Activated naive CD4-positive, alpha-beta T cell treated with anti-CD3 and anti-CD28 coated beads for 36 hours (primary cell): ENCODE measurements at regions of chr22 and their contacts with region 1.

Region 1: DNA sequence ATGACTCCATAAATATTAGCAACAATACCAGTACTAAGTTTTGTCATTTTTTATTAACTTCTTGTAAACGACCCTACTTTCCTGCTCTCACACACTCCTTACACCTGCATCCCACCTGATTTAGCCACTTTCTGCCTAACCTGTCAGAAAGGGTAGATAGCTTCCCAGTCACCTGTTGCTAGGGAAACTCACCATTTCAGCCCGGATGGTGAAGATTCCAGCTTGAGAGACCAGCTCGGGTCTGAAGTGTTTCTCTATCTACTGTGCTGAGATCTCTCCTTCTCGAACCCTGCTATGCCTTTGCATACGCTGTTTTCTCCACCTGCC is at the start of gene PARVG:
- DNase-seq: peak; percentile 64
- H3K4me3 Mint-ChIP-seq: peak within 1 kb of the TSS; percentile 92
- H3K27ac Mint-ChIP-seq: peak within 1 kb of the TSS; percentile 95
- H3K4me1 Mint-ChIP-seq: peaks cover 15% of the 10 kb centered on the region
- H3K27me3 Mint-ChIP-seq: no peaks in the 10 kb centered on the region
- total RNA-seq, gene PARVG: 64.6 to 67.8 TPM

Region 2: DNA sequence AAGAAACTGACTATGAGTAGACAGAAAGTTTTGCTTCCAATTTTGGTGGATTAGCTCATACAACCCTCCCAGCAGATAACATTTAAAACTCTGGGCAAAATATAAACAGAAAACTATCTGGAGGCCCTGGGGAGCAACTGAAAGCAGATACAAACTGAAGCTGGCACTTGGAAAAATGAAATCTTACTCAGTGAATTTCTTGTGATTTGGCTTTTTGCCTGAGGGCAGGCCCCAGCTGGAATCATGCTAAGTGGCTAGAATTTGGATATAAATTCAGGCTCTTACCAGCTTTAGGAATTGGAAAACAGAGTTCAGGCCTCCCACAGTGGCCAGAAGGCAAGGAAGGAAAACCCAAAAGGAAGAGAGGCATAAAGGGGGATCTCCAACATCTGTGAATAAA is 454.3 kb before region 1 on chr22:
- CTCF ChIA-PET with region 1: no interaction called
- intact Hi-C with region 1: no loop called
- DNase-seq: no peak
- H3K4me3 Mint-ChIP-seq: no peak overlapping the region
- H3K27ac Mint-ChIP-seq: no peak overlapping the region
- H3K4me1 Mint-ChIP-seq: no peaks in the 10 kb centered on the region
- H3K27me3 Mint-ChIP-seq: peaks cover 6% of the 10 kb centered on the region

Region 3: GRCh38 chr22:43993027-43993760 is 187.5 kb before region 1 on chr22:
- CTCF ChIA-PET with region 1: interaction called, 8 read pairs
- intact Hi-C with region 1: loop called (anchors 10 kb)
- DNase-seq: peak; percentile 68
- H3K4me3 Mint-ChIP-seq: no peak overlapping the region
- H3K27ac Mint-ChIP-seq: no peak overlapping the region
- H3K4me1 Mint-ChIP-seq: peaks cover 17% of the 10 kb centered on the region
- H3K27me3 Mint-ChIP-seq: no peaks in the 10 kb centered on the region

Region 4: GRCh38 chr22:44026630-44027511 is 153.8 kb before region 1 on chr22:
- CTCF ChIA-PET with region 1: no interaction called
- intact Hi-C with region 1: loop called (anchors 5 kb)
- DNase-seq: peak; percentile 82
- H3K4me3 Mint-ChIP-seq: peak overlapping the region; percentile 67
- H3K27ac Mint-ChIP-seq: peak overlapping the region; percentile 86
- H3K4me1 Mint-ChIP-seq: peaks cover 39% of the 10 kb centered on the region
- H3K27me3 Mint-ChIP-seq: peaks cover 22% of the 10 kb centered on the region

Region 5: GRCh38 chr22:44193535-44193891 is 12.8 kb after region 1 on chr22:
- CTCF ChIA-PET with region 1: interaction called, 3 read pairs
- intact Hi-C with region 1: loop called (anchors 1 kb)
- DNase-seq: peak; percentile 61
- H3K4me3 Mint-ChIP-seq: no peak overlapping the region
- H3K27ac Mint-ChIP-seq: no peak overlapping the region
- H3K4me1 Mint-ChIP-seq: peaks cover 33% of the 10 kb centered on the region
- H3K27me3 Mint-ChIP-seq: no peaks in the 10 kb centered on the region

Region 6: DNA sequence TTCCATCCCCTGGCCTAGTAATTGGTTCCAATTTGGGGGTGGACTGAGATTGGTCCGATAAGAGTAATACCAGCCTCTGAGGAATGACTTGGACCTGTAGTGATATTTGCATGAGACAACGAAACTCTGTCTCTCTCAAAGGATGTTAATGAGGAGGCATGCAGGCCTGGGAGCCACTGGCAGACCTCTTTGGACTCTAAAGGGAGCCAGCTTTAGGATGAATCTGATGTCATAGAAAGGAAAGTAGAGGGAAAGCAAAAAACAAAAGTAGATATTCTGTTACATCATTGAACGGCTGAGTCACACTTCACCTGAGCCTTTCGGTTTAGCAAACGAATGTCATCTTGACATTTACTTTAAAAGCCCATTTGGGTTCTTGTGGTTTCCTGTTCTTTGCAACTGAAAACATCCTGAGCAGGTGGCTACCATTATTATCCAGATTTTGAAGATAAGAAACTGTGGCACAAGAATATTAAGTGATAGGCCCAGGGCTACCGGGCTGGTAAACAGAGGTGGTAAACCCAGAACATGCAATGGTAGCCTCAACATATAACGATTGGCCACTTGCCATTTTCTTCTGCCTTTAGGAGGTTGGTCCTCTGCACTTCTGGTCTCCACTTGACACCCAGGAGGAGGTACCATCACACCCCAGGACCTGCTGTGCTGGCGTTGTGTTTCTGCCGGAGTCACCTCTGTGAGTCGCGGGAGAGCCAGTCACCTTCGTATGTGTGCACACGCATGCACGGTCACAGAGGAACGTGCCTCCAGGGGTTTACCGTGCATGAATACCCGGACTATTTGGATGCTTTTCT is 274.7 kb after region 1 on chr22:
- CTCF ChIA-PET with region 1: no interaction called
- intact Hi-C with region 1: loop called (anchors 5 kb)
- DNase-seq: peak; percentile 57
- H3K4me3 Mint-ChIP-seq: peak overlapping the region; percentile 27
- H3K27ac Mint-ChIP-seq: peak overlapping the region; percentile 80
- H3K4me1 Mint-ChIP-seq: peaks cover 27% of the 10 kb centered on the region
- H3K27me3 Mint-ChIP-seq: no peaks in the 10 kb centered on the region

Region 7: DNA sequence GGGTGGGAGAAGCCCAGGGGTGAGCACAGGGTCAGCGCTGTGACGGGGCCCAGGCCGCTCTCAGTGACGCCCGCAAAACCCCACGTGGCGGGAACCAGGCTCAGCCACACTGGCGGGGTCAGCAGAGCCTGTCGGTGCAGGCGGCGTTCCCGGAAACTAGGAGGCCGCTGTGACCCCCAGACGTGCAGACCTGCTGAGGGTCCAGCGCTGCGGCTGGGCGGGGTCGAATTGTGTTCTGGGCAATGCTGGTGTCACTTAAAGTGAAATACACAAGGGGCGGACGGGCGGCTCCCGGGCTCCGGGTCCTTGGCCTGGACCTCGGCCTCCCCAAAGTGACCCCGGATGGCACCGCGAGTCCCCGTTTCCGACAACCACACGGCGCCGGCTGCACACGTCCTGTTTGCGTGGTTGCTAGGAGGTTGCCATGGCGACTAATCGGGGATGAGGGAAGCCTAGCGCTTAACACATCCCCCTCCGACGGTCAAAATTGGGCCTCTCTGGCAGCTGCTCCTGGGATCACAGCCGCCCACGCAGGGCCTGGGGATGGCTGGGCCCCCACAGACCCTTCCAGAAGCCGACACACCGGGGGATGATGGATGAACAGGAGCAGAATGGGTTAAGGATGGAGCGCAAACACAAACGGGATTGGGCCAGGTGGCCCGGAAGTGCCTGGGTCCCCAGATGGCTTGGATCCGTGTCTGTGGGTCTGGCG is 439.6 kb after region 1 on chr22:
- CTCF ChIA-PET with region 1: interaction called, 3 read pairs
- intact Hi-C with region 1: loop called (anchors 5 kb)
- DNase-seq: peak; percentile 87
- H3K4me3 Mint-ChIP-seq: peak overlapping the region; percentile 17
- H3K27ac Mint-ChIP-seq: no peak overlapping the region
- H3K4me1 Mint-ChIP-seq: peaks cover 5% of the 10 kb centered on the region
- H3K27me3 Mint-ChIP-seq: no peaks in the 10 kb centered on the region